ENCODE measurements at regions of chr11 and their contacts with region 1.

Region 1: DNA sequence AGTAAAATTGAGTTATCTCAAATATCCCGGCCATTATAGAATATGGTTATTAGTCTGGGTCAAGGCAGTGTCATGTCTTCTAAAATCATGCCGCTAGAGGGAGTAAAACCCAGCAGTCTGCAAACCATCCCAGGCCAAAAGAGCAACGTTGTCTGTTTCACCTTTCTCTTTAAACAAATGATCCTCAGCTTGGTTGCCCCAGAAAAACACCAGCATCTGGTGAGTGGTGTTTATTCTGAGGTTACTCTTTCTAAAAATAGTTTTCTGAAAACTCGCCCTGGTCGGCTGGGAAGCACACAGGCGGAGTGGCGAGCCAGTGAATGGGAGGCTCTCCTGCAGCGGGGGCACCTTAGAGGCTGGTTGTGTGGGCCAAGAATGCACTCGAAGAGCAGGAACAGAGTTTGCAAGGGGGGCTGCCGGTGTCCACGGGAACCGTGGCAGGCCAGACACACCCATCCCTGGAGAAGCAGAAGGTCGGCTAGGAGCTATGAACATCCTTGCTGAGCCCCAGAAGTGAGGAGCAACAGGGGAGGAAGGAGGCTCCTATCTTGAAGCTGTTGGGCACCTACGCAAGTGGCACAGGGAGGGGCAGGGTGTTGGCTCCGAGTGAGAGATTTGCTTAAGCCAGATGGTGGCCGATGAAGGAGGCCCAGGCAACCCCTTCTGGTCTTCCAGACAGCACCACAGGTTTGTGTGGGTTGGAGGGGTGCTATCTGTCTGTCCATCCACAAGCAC is 297.1 kb downstream of the ETS1 start:
- DNase-seq: peak; percentile 83
- H3K4me3 Mint-ChIP-seq: peak overlapping the region; percentile 87
- H3K27ac Mint-ChIP-seq: peak overlapping the region; percentile 96
- H3K4me1 Mint-ChIP-seq: peaks cover 98% of the 10 kb centered on the region
- H3K27me3 Mint-ChIP-seq: no peaks in the 10 kb centered on the region

Region 2: GRCh38 chr11:128172046-128172878 is 118.0 kb before region 1 on chr11:
- CTCF ChIA-PET with region 1: interaction called, 3 read pairs
- intact Hi-C with region 1: loop called (anchors 2 kb)
- DNase-seq: peak; percentile 96
- H3K4me3 Mint-ChIP-seq: no peak overlapping the region
- H3K27ac Mint-ChIP-seq: no peak overlapping the region
- H3K4me1 Mint-ChIP-seq: peaks cover 7% of the 10 kb centered on the region
- H3K27me3 Mint-ChIP-seq: no peaks in the 10 kb centered on the region

Region 3: GRCh38 chr11:128238521-128239265 is 51.6 kb before region 1 on chr11:
- CTCF ChIA-PET with region 1: no interaction called
- intact Hi-C with region 1: loop called (anchors 1 kb)
- DNase-seq: no peak
- H3K4me3 Mint-ChIP-seq: peak overlapping the region; percentile 41
- H3K27ac Mint-ChIP-seq: peak overlapping the region; percentile 55
- H3K4me1 Mint-ChIP-seq: peaks cover 31% of the 10 kb centered on the region
- H3K27me3 Mint-ChIP-seq: no peaks in the 10 kb centered on the region

Region 4: DNA sequence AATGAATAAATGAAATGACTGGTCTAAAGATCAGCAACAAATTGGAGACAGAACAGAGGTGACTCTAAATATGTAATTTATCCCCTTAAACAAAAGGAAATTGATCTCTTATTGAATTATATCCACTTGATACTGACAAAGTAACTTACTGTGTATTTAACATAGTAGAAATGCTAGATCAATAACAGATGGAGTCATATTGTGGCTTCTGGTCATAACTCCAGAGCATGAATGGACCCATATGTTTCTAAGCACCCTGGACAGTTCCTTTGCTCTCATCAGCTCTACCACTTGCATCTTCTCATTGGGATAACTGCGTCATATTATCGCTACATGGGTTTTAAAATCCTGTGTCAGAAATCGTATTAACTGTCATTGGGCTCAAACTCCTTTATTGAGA is 74.8 kb after region 1 on chr11:
- CTCF ChIA-PET with region 1: no interaction called
- intact Hi-C with region 1: no loop called
- DNase-seq: peak; percentile 31
- H3K4me3 Mint-ChIP-seq: no peak overlapping the region
- H3K27ac Mint-ChIP-seq: no peak overlapping the region
- H3K4me1 Mint-ChIP-seq: peaks cover 11% of the 10 kb centered on the region
- H3K27me3 Mint-ChIP-seq: no peaks in the 10 kb centered on the region

Region 5: GRCh38 chr11:128379587-128380580 is 89.6 kb after region 1 on chr11:
- CTCF ChIA-PET with region 1: no interaction called
- intact Hi-C with region 1: loop called (anchors 1 kb)
- DNase-seq: peak; percentile 56
- H3K4me3 Mint-ChIP-seq: no peak overlapping the region
- H3K27ac Mint-ChIP-seq: peak overlapping the region; percentile 61
- H3K4me1 Mint-ChIP-seq: peaks cover 37% of the 10 kb centered on the region
- H3K27me3 Mint-ChIP-seq: no peaks in the 10 kb centered on the region

Region 6: GRCh38 chr11:128506999-128507611 is 216.8 kb after region 1 on chr11:
- CTCF ChIA-PET with region 1: interaction called, 12 read pairs
- intact Hi-C with region 1: loop called (anchors 1 kb)
- DNase-seq: peak; percentile 82
- H3K4me3 Mint-ChIP-seq: peak overlapping the region; percentile 77
- H3K27ac Mint-ChIP-seq: peak overlapping the region; percentile 97
- H3K4me1 Mint-ChIP-seq: peaks cover 88% of the 10 kb centered on the region
- H3K27me3 Mint-ChIP-seq: no peaks in the 10 kb centered on the region

Region 7: GRCh38 chr11:128568166-128568778 is 278.0 kb after region 1 on chr11:
- CTCF ChIA-PET with region 1: no interaction called
- intact Hi-C with region 1: no loop called
- DNase-seq: peak; percentile 64
- H3K4me3 Mint-ChIP-seq: no peak overlapping the region
- H3K27ac Mint-ChIP-seq: no peak overlapping the region
- H3K4me1 Mint-ChIP-seq: peaks cover 28% of the 10 kb centered on the region
- H3K27me3 Mint-ChIP-seq: no peaks in the 10 kb centered on the region

Region 8: GRCh38 chr11:128630367-128631230 is 340.3 kb after region 1 on chr11:
- CTCF ChIA-PET with region 1: interaction called, 133 read pairs
- intact Hi-C with region 1: loop called (anchors 1 kb)
- DNase-seq: peak; percentile 97
- H3K4me3 Mint-ChIP-seq: peak overlapping the region; percentile 60
- H3K27ac Mint-ChIP-seq: peak overlapping the region; percentile 84
- H3K4me1 Mint-ChIP-seq: peaks cover 59% of the 10 kb centered on the region
- H3K27me3 Mint-ChIP-seq: no peaks in the 10 kb centered on the region

Region 9: GRCh38 chr11:128831174-128832120 is 541.2 kb after region 1 on chr11:
- CTCF ChIA-PET with region 1: interaction called, 10 read pairs
- intact Hi-C with region 1: loop called (anchors 1 kb)
- DNase-seq: peak; percentile 96
- H3K4me3 Mint-ChIP-seq: peak overlapping the region; percentile 8
- H3K27ac Mint-ChIP-seq: peak overlapping the region; percentile 85
- H3K4me1 Mint-ChIP-seq: peaks cover 17% of the 10 kb centered on the region
- H3K27me3 Mint-ChIP-seq: no peaks in the 10 kb centered on the region

Measured in activated naive CD4-positive, alpha-beta T cell treated with anti-CD3 and anti-CD28 coated beads for 36 hours (primary cell).